ENCODE measurements at regions of chr20 and their contacts with region 1.

Region 1: DNA sequence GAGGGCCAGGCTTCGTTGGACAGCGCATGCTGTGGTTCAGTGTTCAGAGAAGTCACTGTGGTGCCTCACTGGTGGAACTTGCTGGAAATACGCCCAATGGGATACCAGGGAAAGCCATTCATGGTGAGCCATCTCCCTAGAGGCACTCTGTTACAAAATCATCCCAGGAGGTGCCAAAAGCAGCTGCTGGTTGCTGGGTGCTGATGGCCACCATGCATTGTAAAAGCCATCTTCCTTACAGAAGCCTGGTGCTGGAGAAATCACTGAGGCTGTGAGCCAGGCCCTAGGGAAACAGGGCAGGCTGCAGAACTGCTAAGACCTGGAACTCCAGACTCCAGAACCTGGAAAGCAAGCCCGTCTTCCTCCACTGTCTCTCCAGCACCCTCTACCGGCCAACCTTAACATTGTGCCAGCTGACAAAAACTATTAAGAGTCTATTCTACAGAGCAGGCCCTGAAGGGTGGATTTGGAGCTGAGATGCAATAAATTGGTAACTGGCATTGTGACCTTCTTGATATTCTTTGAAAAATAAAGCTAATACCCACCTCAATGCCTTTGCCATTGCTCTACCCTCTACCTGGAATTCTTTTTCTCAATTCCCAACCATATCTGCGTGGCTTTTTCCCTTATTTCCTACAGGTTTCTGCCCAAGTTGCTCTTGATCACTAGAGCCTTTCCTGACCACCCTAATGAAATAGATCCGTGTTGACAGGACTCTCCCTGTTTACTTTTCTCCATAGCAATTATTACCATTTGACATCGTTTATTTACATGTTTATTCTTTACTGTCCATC is 18.5 kb downstream of the SNRPB start:
- DNase-seq: no peak
- ATAC-seq: peak; percentile 80
- H3K4me3 ChIP-seq: no peak overlapping the region
- H3K27ac ChIP-seq: no peak overlapping the region
- H3K4me1 ChIP-seq: no peaks in the 10 kb centered on the region
- H3K27me3 ChIP-seq: no peaks in the 10 kb centered on the region
- CTCF ChIP-seq: peak; percentile 76 to 89 (median 87)
- EP300 ChIP-seq: no peak
- POLR2A ChIP-seq: no peak
- RAD21 ChIP-seq: peak; percentile 69

Region 2: GRCh38 chr20:1764136-1765033 is 687.8 kb before region 1 on chr20:
- CTCF ChIA-PET with region 1: no interaction called
- POLR2A ChIA-PET with region 1: no interaction called
- RAD21 ChIA-PET with region 1: interaction called, 4 read pairs
- SMC1A ChIA-PET with region 1: no interaction called
- in situ Hi-C with region 1: no loop called
- intact Hi-C with region 1: loop called (anchors 10 kb)
- DNase-seq: peak; percentile 57
- ATAC-seq: peak; percentile 100
- H3K4me3 ChIP-seq: no peak overlapping the region
- H3K27ac ChIP-seq: no peak overlapping the region
- H3K4me1 ChIP-seq: peaks cover 4% of the 10 kb centered on the region
- H3K27me3 ChIP-seq: peaks cover 0 to 2% of the 10 kb centered on the region in 2 experiments; a peak in 2 of 4 replicates
- CTCF ChIP-seq: peak; percentile 80 to 89 (median 81)
- EP300 ChIP-seq: no peak
- POLR2A ChIP-seq: no peak
- RAD21 ChIP-seq: peak; percentile 79

Region 3: GRCh38 chr20:2314759-2315439 is 137.2 kb before region 1 on chr20:
- CTCF ChIA-PET with region 1: no interaction called
- POLR2A ChIA-PET with region 1: no interaction called
- RAD21 ChIA-PET with region 1: no interaction called
- SMC1A ChIA-PET with region 1: no interaction called
- in situ Hi-C with region 1: no loop called
- intact Hi-C with region 1: no loop called
- DNase-seq: no peak
- ATAC-seq: no peak
- H3K4me3 ChIP-seq: no peak overlapping the region
- H3K27ac ChIP-seq: no peak overlapping the region
- H3K4me1 ChIP-seq: no peaks in the 10 kb centered on the region
- H3K27me3 ChIP-seq: peaks cover 2 to 5% of the 10 kb centered on the region in 2 experiments; a peak in 3 of 4 replicates
- CTCF ChIP-seq: no peak
- EP300 ChIP-seq: no peak
- POLR2A ChIP-seq: no peak
- RAD21 ChIP-seq: no peak

Region 4: GRCh38 chr20:2349818-2350508 is 102.2 kb before region 1 on chr20:
- CTCF ChIA-PET with region 1: interaction called, 21 read pairs
- POLR2A ChIA-PET with region 1: no interaction called
- RAD21 ChIA-PET with region 1: interaction called, 4 read pairs
- SMC1A ChIA-PET with region 1: interaction called, 3 read pairs
- in situ Hi-C with region 1: no loop called
- intact Hi-C with region 1: no loop called
- DNase-seq: no peak
- ATAC-seq: no peak
- H3K4me3 ChIP-seq: no peak overlapping the region
- H3K27ac ChIP-seq: no peak overlapping the region
- H3K4me1 ChIP-seq: no peaks in the 10 kb centered on the region
- H3K27me3 ChIP-seq: peaks cover 0 to 2% of the 10 kb centered on the region in 2 experiments; a peak in 2 of 4 replicates
- CTCF ChIP-seq: no peak
- EP300 ChIP-seq: no peak
- POLR2A ChIP-seq: no peak
- RAD21 ChIP-seq: no peak

Region 5: DNA sequence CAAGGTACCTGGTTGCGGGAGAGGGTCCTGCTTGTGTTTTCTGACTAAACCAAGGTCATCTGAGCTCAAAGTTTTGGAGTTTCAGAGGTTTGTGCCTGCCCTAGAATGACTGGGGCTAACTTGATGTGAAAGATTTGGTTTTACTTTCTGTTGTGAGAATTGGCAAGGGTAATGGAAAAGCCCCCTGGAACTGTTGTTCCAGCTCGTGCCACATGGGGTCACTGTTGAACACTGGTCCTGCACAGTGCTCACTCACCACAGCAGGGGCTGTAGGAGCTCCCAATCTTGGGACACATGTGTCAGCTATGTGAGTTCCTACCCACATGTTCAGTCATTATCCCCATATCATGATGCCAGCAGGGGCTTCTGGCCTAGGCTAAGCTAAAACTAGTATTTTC is 65.0 kb before region 1 on chr20:
- CTCF ChIA-PET with region 1: interaction called, 20 read pairs
- POLR2A ChIA-PET with region 1: no interaction called
- RAD21 ChIA-PET with region 1: interaction called, 4 read pairs
- SMC1A ChIA-PET with region 1: interaction called, 4 read pairs
- in situ Hi-C with region 1: no loop called
- intact Hi-C with region 1: no loop called
- DNase-seq: peak; percentile 21
- ATAC-seq: peak; percentile 82
- H3K4me3 ChIP-seq: no peak overlapping the region
- H3K27ac ChIP-seq: no peak overlapping the region
- H3K4me1 ChIP-seq: peaks cover 14% of the 10 kb centered on the region
- H3K27me3 ChIP-seq: no peaks in the 10 kb centered on the region; a peak in 1 of 4 replicates
- CTCF ChIP-seq: peak; percentile 47 to 66 (median 51); a peak in 5 of 6 replicates
- EP300 ChIP-seq: no peak
- POLR2A ChIP-seq: no peak
- RAD21 ChIP-seq: 0 out of 2 replicates have a peak, but pooled peaks have one; percentile 16

Region 6: DNA sequence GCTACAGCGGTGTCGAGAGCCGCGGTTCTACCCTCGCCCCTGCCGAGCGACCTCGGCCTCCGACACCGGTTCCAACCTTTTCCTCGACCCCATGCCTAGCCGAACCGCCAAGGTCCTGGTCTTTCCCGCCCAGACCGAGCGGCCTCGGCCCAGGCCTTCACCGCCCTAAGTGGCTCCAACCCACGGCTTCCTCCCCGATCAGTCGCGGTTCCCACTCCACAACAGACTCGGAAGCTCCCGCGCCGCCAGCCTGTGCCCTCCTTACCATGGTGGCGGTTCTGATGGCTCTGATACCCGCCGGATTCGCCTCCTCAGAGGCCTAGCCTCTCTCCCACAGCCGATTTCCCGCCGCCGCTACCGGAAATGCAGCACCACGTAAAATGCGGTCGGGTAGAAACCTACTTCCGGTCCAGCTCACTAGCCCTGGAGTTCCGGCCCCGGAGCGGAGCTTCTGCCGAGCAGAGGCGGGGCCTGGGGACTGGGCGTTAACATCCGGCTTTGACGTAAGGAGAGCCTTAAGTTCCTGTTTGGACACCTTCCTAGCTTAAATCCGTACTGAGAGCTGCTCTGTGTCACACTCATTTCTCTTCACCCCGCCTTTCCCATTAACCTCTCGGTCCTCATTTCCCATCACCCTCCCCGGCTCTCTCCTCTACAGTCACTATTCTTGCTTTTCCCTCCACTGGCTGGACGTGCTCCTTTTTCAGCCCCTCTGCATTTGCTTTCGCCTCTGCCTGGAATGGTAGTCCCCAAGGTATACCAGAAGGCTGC is 18.5 kb after region 1 on chr20 and contains the start of gene SNRPB:
- CTCF ChIA-PET with region 1: interaction called, 15 read pairs
- POLR2A ChIA-PET with region 1: interaction called, 4 read pairs
- RAD21 ChIA-PET with region 1: interaction called, 3 read pairs
- SMC1A ChIA-PET with region 1: interaction called, 9 read pairs
- in situ Hi-C with region 1: no loop called
- intact Hi-C with region 1: no loop called
- DNase-seq: peak; percentile 94
- ATAC-seq: peak; percentile 97
- H3K4me3 ChIP-seq: peak within 1 kb of the TSS; percentile 91
- H3K27ac ChIP-seq: peak within 1 kb of the TSS; percentile 94
- H3K4me1 ChIP-seq: no peaks in the 10 kb centered on the region
- H3K27me3 ChIP-seq: no peaks in the 10 kb centered on the region
- CTCF ChIP-seq: no peak
- EP300 ChIP-seq: no peak
- POLR2A ChIP-seq: peak; percentile 95
- RAD21 ChIP-seq: no peak
- polyA plus RNA-seq, gene SNRPB: 15.0 to 108 TPM

Region 7: DNA sequence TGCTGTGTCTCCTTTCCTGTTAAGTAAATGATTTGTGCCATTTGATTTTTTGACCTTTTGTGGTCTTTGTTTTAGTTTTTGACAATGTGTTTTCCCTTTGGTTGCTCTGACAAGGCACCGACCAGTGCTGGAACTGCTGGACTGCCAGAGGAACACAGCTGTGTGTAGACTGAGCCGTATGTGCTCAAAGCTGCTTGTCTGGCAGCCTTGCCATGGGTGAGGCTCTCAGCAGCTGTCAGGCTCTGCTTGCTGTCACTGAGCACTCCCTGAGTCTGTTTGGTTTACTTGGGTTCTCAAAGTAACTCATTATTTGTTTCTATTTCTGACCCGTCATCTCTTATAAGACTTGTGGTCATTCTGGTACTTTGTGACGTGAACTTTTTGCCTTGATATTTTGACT is 33.5 kb after region 1 on chr20:
- CTCF ChIA-PET with region 1: no interaction called
- POLR2A ChIA-PET with region 1: no interaction called
- RAD21 ChIA-PET with region 1: no interaction called
- SMC1A ChIA-PET with region 1: no interaction called
- in situ Hi-C with region 1: no loop called
- intact Hi-C with region 1: no loop called
- DNase-seq: no peak
- ATAC-seq: no peak
- H3K4me3 ChIP-seq: no peak overlapping the region
- H3K27ac ChIP-seq: no peak overlapping the region
- H3K4me1 ChIP-seq: no peaks in the 10 kb centered on the region
- H3K27me3 ChIP-seq: no peaks in the 10 kb centered on the region
- CTCF ChIP-seq: no peak
- EP300 ChIP-seq: no peak
- POLR2A ChIP-seq: no peak
- RAD21 ChIP-seq: no peak

Region 8: DNA sequence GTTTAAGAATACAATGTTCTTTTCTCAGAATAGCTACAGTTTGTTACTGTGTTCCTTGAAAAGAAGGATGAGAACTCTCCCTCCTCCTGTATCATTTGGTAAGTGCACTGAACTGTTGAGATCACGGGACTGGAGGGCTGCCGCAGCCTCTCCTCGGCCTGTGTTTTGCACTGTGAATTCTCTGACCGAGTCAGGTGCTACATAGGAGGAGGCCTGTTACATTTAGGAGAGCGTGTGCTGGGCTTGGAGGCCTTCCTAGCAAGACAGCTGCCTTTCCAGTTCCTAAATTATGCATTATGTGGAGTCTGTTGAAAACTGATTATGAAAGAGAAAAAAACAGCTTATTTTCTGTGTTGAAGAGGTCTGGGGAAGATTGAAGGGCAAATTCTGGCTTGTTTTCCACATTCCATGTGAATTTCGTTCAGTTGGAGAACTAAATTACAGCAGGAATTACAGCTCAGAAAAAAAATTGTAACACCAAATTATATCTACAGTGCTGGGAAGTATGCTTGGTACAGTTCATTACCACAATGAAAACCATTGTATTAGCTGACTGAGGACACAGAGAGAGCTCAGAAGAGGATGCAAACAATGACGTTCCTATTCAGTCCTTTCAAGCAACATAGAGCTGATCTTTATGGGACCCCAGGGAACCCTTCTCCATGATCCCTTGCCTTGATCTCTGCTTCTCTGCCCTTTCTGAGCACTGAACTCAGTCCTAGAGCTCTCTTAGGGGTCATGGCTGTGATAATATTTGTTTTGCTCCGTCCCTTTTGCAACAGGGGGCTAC is 87.0 kb after region 1 on chr20:
- CTCF ChIA-PET with region 1: no interaction called
- POLR2A ChIA-PET with region 1: no interaction called
- RAD21 ChIA-PET with region 1: no interaction called
- SMC1A ChIA-PET with region 1: no interaction called
- in situ Hi-C with region 1: no loop called
- intact Hi-C with region 1: no loop called
- DNase-seq: no peak
- ATAC-seq: no peak
- H3K4me3 ChIP-seq: no peak overlapping the region
- H3K27ac ChIP-seq: no peak overlapping the region
- H3K4me1 ChIP-seq: no peaks in the 10 kb centered on the region
- H3K27me3 ChIP-seq: peaks cover 0 to 3% of the 10 kb centered on the region in 2 experiments; a peak in 2 of 4 replicates
- CTCF ChIP-seq: no peak
- EP300 ChIP-seq: no peak
- POLR2A ChIP-seq: no peak
- RAD21 ChIP-seq: no peak

Measured in GM12878 (cell line).